Activated CD8-positive, alpha-beta T cell treated with anti-CD3 and anti-CD28 coated beads, Interleukin-2, amount 10 ng/mL, durations not matched to agents 7 days and 5 days (primary cell): ENCODE measurements at regions of chr5 and their contacts with region 1.

Region 1: GRCh38 chr5:113336975-113337374 is 97.8 kb downstream of the TSSK1B start:
- DNase-seq: peak; percentile 54
- ATAC-seq: peak; percentile 80
- H3K4me3 Mint-ChIP-seq: no peak overlapping the region
- H3K27ac Mint-ChIP-seq: no peak overlapping the region
- H3K4me1 Mint-ChIP-seq: peaks cover 38% of the 10 kb centered on the region
- H3K27me3 Mint-ChIP-seq: peaks cover 10% of the 10 kb centered on the region

Region 2: GRCh38 chr5:113232667-113233066 is 104.3 kb before region 1 on chr5:
- CTCF ChIA-PET with region 1: no interaction called
- POLR2A ChIA-PET with region 1: no interaction called
- DNase-seq: no peak
- ATAC-seq: no peak
- H3K4me3 Mint-ChIP-seq: no peak overlapping the region
- H3K27ac Mint-ChIP-seq: no peak overlapping the region
- H3K4me1 Mint-ChIP-seq: no peaks in the 10 kb centered on the region
- H3K27me3 Mint-ChIP-seq: peaks cover 4% of the 10 kb centered on the region

Region 3: DNA sequence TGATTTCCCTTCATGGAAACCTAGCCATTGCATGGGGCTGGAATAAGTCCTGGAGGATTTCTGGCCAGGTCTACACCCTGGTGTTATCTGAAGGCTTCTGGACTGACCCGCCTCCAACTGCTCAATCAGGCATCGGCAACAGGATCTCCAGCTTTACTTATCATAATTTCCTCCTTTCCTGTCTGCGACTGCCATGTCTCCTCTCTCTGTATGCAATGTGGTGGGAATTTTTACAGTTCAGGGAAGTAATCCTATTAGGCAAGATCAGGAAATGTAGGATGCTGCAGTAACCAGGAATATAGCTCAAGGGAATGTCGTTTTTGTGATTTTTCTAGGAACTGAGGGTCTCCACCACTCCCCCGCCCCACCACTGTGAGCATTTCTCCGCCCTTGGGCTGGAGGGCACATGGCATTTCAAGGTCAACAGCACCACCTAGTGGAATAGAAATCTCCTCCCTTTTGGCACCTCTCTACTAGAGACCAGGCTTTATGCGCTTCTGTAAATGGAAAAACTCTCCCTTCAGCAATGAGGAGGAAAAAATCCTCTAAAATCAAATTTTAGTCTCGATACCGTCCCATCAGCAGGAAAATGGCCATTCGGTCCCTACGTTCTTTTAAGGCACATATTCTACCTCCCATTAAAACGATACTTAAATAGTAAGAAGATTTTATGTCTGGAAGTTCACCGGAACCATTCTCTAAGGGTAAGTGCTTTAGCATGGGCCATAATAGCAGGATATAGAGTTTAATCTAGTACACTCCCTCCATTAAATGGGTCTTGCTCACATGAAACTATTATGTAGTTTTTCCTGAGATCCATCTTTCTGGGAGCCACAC is 269.5 kb after region 1 on chr5:
- CTCF ChIA-PET with region 1: interaction called, 90 read pairs
- POLR2A ChIA-PET with region 1: no interaction called
- DNase-seq: peak; percentile 68
- ATAC-seq: peak; percentile 87
- H3K4me3 Mint-ChIP-seq: no peak overlapping the region
- H3K27ac Mint-ChIP-seq: no peak overlapping the region
- H3K4me1 Mint-ChIP-seq: peaks cover 15% of the 10 kb centered on the region
- H3K27me3 Mint-ChIP-seq: peaks cover 26% of the 10 kb centered on the region